Activated naive CD4-positive, alpha-beta T cell treated with anti-CD3 and anti-CD28 coated beads, Interleukin-2, amount 10 ng/mL, durations not matched to agents 7 days and 5 days (primary cell): ENCODE measurements at regions of chr3 and their contacts with region 1.

Region 1: GRCh38 chr3:11379233-11379823 is 107.1 kb downstream of the ATG7 start:
- DNase-seq: no peak
- H3K4me3 Mint-ChIP-seq: no peak overlapping the region
- H3K27ac Mint-ChIP-seq: no peak overlapping the region
- H3K4me1 Mint-ChIP-seq: no peaks in the 10 kb centered on the region
- H3K27me3 Mint-ChIP-seq: no peaks in the 10 kb centered on the region

Region 2: DNA sequence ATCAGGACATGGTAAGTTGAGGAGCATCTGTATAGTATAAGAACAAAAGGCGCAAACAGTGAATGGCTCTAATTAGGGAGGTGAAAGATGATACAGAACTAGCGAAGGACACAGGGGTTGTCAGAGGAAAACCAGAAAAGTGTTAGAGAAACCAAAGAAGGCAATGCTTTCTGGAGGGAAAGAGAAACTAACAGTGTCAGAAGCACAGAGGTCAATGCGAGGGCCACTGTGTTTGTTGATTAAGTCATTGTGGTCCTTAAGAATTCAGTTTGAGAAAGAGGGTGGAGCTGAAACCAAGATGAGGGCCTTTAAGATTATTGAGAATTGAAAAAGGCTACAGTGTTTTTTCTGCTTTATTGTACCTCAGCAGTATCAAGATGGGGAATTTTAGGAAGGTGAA is 78.4 kb before region 1 on chr3:
- CTCF ChIA-PET with region 1: no interaction called
- DNase-seq: no peak
- H3K4me3 Mint-ChIP-seq: no peak overlapping the region
- H3K27ac Mint-ChIP-seq: no peak overlapping the region
- H3K4me1 Mint-ChIP-seq: peaks cover 20% of the 10 kb centered on the region
- H3K27me3 Mint-ChIP-seq: no peaks in the 10 kb centered on the region

Region 3: GRCh38 chr3:11651900-11652299 is 272.6 kb after region 1 on chr3:
- CTCF ChIA-PET with region 1: interaction called, 61 read pairs
- DNase-seq: no peak
- H3K4me3 Mint-ChIP-seq: no peak overlapping the region
- H3K27ac Mint-ChIP-seq: no peak overlapping the region
- H3K4me1 Mint-ChIP-seq: no peaks in the 10 kb centered on the region
- H3K27me3 Mint-ChIP-seq: peaks cover 15% of the 10 kb centered on the region

Region 4: GRCh38 chr3:11803977-11804892 is 424.9 kb after region 1 on chr3:
- CTCF ChIA-PET with region 1: interaction called, 18 read pairs
- DNase-seq: peak; percentile 57
- H3K4me3 Mint-ChIP-seq: no peak overlapping the region
- H3K27ac Mint-ChIP-seq: no peak overlapping the region
- H3K4me1 Mint-ChIP-seq: peaks cover 10% of the 10 kb centered on the region
- H3K27me3 Mint-ChIP-seq: no peaks in the 10 kb centered on the region